PC-3 (cell line): ENCODE measurements at regions of chr2 and their contacts with region 1.

Region 1: DNA sequence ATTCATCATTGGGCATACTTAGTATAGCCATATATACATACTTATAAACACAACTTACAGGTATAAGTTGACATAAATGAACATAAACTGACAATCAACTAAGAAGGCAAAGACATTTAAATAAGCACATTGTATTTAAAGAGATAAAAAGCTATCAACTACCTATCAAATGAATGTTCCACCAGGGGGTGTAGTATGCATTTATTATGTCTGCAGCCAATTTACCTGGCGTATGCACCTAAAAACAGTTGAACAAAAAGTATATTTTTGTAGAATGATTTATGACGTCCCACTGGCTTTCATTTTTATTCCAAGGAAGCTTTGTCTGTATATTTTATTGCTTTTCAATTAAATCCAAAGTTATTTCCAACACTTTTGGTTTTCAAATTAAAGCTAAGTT is 323.5 kb downstream of the AFF3 start:
- DNase-seq: peak; percentile 71
- ATAC-seq: peak; percentile 14; the same call in 1 of the 2 replicates
- H3K4me3 ChIP-seq: no peak overlapping the region
- H3K27ac ChIP-seq: no peak overlapping the region
- H3K4me1 ChIP-seq: peaks cover 7% of the 10 kb centered on the region; the same call in 1 of the 2 replicates
- H3K27me3 ChIP-seq: no peaks in the 10 kb centered on the region
- CTCF ChIP-seq: peak; percentile 71

Region 2: DNA sequence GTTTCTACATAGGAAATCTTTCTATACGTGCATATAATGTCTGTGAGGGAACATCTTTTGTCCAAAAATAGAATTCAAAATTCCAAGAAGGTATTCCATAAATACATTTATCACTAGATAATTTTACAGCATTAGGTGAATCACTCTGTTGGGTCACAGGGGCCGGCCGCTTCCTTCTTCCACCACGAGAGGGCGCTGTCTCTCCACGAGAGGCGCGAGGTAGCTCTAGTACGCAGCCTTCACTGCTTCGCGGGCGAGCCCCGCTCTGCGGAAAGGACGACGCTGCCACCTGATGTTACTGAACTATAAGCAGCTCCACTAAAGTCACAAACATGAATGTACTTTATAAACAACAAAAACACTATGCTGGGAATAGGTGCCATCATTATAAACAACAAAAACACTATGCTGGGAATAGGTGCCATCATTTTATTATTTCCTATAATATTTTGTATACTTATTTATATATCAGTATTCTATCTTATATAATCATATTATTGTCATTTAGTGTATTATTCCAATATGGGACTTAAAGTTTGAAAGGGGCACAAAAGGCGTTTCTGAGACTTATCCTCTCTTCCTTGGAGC is 259.7 kb before region 1 on chr2:
- CTCF ChIA-PET with region 1: interaction called, 5 read pairs
- POLR2A ChIA-PET with region 1: no interaction called
- intact Hi-C with region 1: loop called (anchors 1 kb)
- DNase-seq: peak; percentile 90
- ATAC-seq: peak; percentile 100
- H3K4me3 ChIP-seq: no peak overlapping the region
- H3K27ac ChIP-seq: no peak overlapping the region
- H3K4me1 ChIP-seq: no peaks in the 10 kb centered on the region
- H3K27me3 ChIP-seq: no peaks in the 10 kb centered on the region
- CTCF ChIP-seq: peak; percentile 97

Region 3: GRCh38 chr2:99881901-99882591 is 63.2 kb after region 1 on chr2:
- CTCF ChIA-PET with region 1: no interaction called
- POLR2A ChIA-PET with region 1: no interaction called
- intact Hi-C with region 1: loop called (anchors 5 kb)
- DNase-seq: peak; percentile 60
- ATAC-seq: no peak
- H3K4me3 ChIP-seq: no peak overlapping the region
- H3K27ac ChIP-seq: no peak overlapping the region
- H3K4me1 ChIP-seq: peaks cover 40% of the 10 kb centered on the region
- H3K27me3 ChIP-seq: no peaks in the 10 kb centered on the region
- CTCF ChIP-seq: no peak

Region 4: GRCh38 chr2:100013892-100014677 is 195.2 kb after region 1 on chr2:
- CTCF ChIA-PET with region 1: no interaction called
- POLR2A ChIA-PET with region 1: no interaction called
- intact Hi-C with region 1: loop called (anchors 5 kb)
- DNase-seq: peak; percentile 80
- ATAC-seq: peak; percentile 99
- H3K4me3 ChIP-seq: no peak overlapping the region
- H3K27ac ChIP-seq: peak overlapping the region; percentile 1; the same call in 1 of the 2 replicates
- H3K4me1 ChIP-seq: peaks cover 28% of the 10 kb centered on the region
- H3K27me3 ChIP-seq: no peaks in the 10 kb centered on the region
- CTCF ChIP-seq: no peak

Region 5: GRCh38 chr2:100262555-100263320 is 443.9 kb after region 1 on chr2:
- CTCF ChIA-PET with region 1: interaction called, 14 read pairs
- POLR2A ChIA-PET with region 1: no interaction called
- intact Hi-C with region 1: loop called (anchors 1 kb)
- DNase-seq: peak; percentile 80
- ATAC-seq: peak; percentile 81
- H3K4me3 ChIP-seq: no peak overlapping the region
- H3K27ac ChIP-seq: no peak overlapping the region
- H3K4me1 ChIP-seq: no peaks in the 10 kb centered on the region
- H3K27me3 ChIP-seq: no peaks in the 10 kb centered on the region
- CTCF ChIP-seq: peak; percentile 94